Activated naive CD8-positive, alpha-beta T cell treated with anti-CD3 and anti-CD28 coated beads, Interleukin-2, amount 10 ng/mL, durations not matched to agents 7 days and 5 days (primary cell): ENCODE measurements at regions of chr22 and their contacts with region 1.

Region 1: DNA sequence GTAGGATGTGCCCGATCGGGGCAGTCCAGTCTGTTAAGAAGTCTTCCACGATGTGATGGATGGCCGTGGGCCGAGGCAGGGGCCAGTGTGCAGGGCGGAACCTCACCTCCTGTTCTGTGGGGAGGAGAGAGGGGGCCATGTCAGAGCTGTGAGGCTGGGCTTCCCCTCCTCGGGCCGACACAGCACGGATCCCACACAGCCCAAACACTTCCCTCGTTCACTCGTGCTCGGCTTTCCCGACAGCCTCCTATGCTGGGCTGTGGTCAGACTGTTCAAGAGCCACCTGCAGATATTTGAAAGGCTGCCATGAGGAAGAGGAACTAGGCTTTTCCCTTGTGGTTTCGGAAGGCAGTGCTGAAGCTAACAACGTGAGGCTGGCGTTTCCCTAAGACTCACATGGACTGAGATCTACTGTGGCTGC is 12.3 kb upstream of the TXN2 start:
- DNase-seq: no peak
- ATAC-seq: peak; percentile 32
- H3K4me3 Mint-ChIP-seq: no peak overlapping the region
- H3K27ac Mint-ChIP-seq: no peak overlapping the region
- H3K4me1 Mint-ChIP-seq: peaks cover 4% of the 10 kb centered on the region
- H3K27me3 Mint-ChIP-seq: no peaks in the 10 kb centered on the region

Region 2: GRCh38 chr22:36506637-36507517 is 13.2 kb after region 1 on chr22 and contains the start of gene FOXRED2:
- POLR2A ChIA-PET with region 1: interaction called, 10 read pairs
- DNase-seq: peak; percentile 97
- ATAC-seq: peak; percentile 95
- H3K4me3 Mint-ChIP-seq: peak within 1 kb of the TSS; percentile 76
- H3K27ac Mint-ChIP-seq: peak within 1 kb of the TSS; percentile 70
- H3K4me1 Mint-ChIP-seq: peaks cover 14% of the 10 kb centered on the region
- H3K27me3 Mint-ChIP-seq: no peaks in the 10 kb centered on the region
- total RNA-seq, gene FOXRED2: 10.9 to 12.0 TPM